AG04450 (cell line): ENCODE measurements at regions of chr1 and their contacts with region 1.

Region 1: DNA sequence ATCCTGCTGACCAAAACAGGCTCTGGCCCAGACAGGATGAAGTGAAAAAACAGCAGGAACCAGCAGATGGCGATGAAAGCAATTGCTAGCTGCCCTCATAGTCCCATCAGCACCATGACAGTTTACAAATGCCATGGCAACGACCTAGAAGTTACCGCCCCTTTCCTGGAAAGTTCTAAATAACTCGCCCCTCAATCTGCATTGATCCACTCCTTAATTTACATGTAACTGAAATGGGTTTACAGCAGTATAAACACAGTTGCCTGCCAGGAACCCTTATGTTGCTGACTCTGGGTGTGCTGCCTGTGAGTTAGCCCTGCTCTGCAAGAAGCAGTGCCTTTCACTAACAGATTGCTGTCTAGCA is 65.5 kb upstream of the CR1L start:
- DNase-seq: peak; percentile 8
- H3K4me3 ChIP-seq: no peak overlapping the region
- H3K27ac ChIP-seq: no peak overlapping the region
- H3K27me3 ChIP-seq: no peaks in the 10 kb centered on the region
- CTCF ChIP-seq: peak; percentile 58

Region 2: GRCh38 chr1:207698822-207699483 is 119.5 kb after region 1 on chr1:
- CTCF ChIA-PET with region 1: interaction called, 10 read pairs
- POLR2A ChIA-PET with region 1: no interaction called
- DNase-seq: peak; percentile 7
- H3K4me3 ChIP-seq: no peak overlapping the region
- H3K27ac ChIP-seq: no peak overlapping the region
- H3K27me3 ChIP-seq: no peaks in the 10 kb centered on the region
- CTCF ChIP-seq: peak; percentile 71